ENCODE measurements at regions of chr9 and their contacts with region 1.

Region 1: DNA sequence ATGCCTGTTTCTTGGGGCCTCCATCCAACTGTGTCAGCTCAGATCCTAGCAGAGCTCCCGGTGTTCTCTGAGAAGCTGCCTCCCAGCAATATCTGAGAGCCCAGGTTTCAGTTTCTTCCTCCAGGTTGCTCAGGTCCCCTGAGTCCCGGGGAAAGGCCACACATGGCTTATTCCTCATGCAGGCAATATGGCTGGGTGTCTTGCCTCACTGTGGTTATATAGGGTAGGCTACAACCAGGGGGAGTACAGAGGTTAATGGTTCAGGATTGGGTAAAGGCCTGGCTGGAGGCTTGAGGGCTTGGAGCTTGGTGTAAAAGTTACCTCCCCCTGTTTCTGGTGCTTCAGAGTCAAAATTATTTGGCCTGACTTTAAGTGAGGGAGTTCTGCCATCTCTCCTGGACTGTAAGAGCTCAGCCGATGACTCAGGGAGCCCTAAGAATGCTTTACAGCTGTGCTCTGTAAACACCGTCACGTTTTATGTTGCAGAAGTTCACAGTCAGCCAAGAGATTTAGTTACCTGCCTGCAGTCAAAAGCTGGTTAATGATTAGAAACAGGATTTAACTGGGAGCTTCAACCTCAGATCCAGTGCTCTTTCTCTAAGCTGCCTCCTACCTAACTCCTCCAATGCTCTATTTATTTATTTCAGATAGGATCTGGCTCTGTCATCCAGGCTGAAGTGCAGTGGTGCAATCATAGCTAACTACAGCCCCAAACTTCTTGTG is 24.3 kb upstream of the UBAP2 start:
- DNase-seq: no peak
- ATAC-seq: peak; percentile 56
- H3K4me3 ChIP-seq: no peak overlapping the region
- H3K27ac ChIP-seq: 0 out of 2 replicates have a peak overlapping the region, but pooled peaks have one; percentile 18
- H3K4me1 ChIP-seq: peaks cover 11% of the 10 kb centered on the region
- H3K27me3 ChIP-seq: no peaks in the 10 kb centered on the region
- CTCF ChIP-seq: no peak
- EP300 ChIP-seq: no peak
- POLR2A ChIP-seq: no peak
- RAD21 ChIP-seq: no peak

Region 2: GRCh38 chr9:33816327-33817252 is 256.4 kb before region 1 on chr9 and contains the start of gene UBE2R2:
- CTCF ChIA-PET with region 1: interaction called, 63 read pairs
- POLR2A ChIA-PET with region 1: no interaction called
- RAD21 ChIA-PET with region 1: interaction called, 10 read pairs
- SMC1A ChIA-PET with region 1: interaction called, 12 read pairs
- in situ Hi-C with region 1: no loop called
- intact Hi-C with region 1: no loop called
- DNase-seq: peak; percentile 85
- ATAC-seq: peak; percentile 71
- H3K4me3 ChIP-seq: peak within 1 kb of the TSS; percentile 95
- H3K27ac ChIP-seq: peak within 1 kb of the TSS; percentile 95
- H3K4me1 ChIP-seq: peaks cover 11% of the 10 kb centered on the region
- H3K27me3 ChIP-seq: no peaks in the 10 kb centered on the region
- CTCF ChIP-seq: no peak
- EP300 ChIP-seq: 0 out of 4 replicates have a peak, but pooled peaks of 1 of the 2 experiments have one; percentile 42
- POLR2A ChIP-seq: peak; percentile 86
- RAD21 ChIP-seq: no peak
- polyA plus RNA-seq, gene UBE2R2: 11.4 to 17.2 TPM

Region 3: GRCh38 chr9:33942471-33943083 is 130.5 kb before region 1 on chr9:
- CTCF ChIA-PET with region 1: interaction called, 10 read pairs
- POLR2A ChIA-PET with region 1: no interaction called
- RAD21 ChIA-PET with region 1: interaction called, 3 read pairs
- SMC1A ChIA-PET with region 1: no interaction called
- in situ Hi-C with region 1: no loop called
- intact Hi-C with region 1: no loop called
- DNase-seq: no peak
- ATAC-seq: no peak
- H3K4me3 ChIP-seq: no peak overlapping the region
- H3K27ac ChIP-seq: no peak overlapping the region
- H3K4me1 ChIP-seq: no peaks in the 10 kb centered on the region
- H3K27me3 ChIP-seq: no peaks in the 10 kb centered on the region
- CTCF ChIP-seq: no peak
- EP300 ChIP-seq: no peak
- POLR2A ChIP-seq: no peak
- RAD21 ChIP-seq: no peak

Region 4: DNA sequence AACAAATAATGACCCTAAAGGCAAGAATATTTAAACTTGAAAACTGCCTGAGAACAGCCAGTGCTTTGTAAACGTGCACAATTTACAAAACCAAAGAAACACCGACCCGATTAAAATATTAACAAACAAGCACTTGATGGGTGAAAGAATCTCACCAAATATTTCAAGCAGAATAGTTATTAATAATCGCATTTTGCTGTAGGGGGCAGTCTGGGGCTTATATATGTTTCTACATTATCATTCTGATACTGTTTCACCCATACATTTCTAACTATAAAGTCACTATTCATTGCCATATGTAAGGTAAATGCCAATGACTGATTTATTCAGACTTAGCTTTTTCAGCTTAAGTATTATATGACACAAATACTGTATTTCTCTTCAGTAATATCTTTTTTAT is 62.0 kb before region 1 on chr9:
- CTCF ChIA-PET with region 1: interaction called, 46 read pairs
- POLR2A ChIA-PET with region 1: no interaction called
- RAD21 ChIA-PET with region 1: interaction called, 4 read pairs
- SMC1A ChIA-PET with region 1: interaction called, 17 read pairs
- in situ Hi-C with region 1: no loop called
- intact Hi-C with region 1: no loop called
- DNase-seq: no peak
- ATAC-seq: peak; percentile 53; the same call in 2 of the 3 replicates
- H3K4me3 ChIP-seq: no peak overlapping the region
- H3K27ac ChIP-seq: no peak overlapping the region
- H3K4me1 ChIP-seq: no peaks in the 10 kb centered on the region
- H3K27me3 ChIP-seq: no peaks in the 10 kb centered on the region
- CTCF ChIP-seq: peak in 2 of 3 experiments; percentile 34 to 47; a peak in 2 of 6 replicates
- EP300 ChIP-seq: no peak
- POLR2A ChIP-seq: no peak
- RAD21 ChIP-seq: peak; percentile 47

Region 5: DNA sequence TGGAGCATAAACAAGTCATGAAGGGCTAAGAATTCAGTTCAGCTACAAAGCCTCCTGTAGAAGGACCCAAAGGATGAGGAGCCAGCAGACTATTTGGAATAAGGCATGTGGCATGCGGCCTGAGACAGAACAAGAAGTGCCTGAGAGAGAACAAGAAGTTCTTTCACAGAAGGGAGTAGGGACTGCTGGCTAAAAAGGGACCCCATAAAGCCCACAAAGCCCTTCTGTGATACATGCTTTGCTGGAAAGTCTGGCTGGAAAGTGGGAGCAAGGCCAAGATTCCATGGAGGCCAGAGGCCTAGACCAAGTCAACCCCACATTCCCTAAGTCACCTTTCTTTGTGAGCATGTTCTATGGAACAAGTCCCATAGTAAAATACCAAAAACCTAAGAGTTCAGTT is 11.5 kb after region 1 on chr9:
- CTCF ChIA-PET with region 1: interaction called, 18 read pairs
- POLR2A ChIA-PET with region 1: interaction called, 3 read pairs
- RAD21 ChIA-PET with region 1: interaction called, 4 read pairs
- SMC1A ChIA-PET with region 1: interaction called, 5 read pairs
- in situ Hi-C with region 1: no loop called
- intact Hi-C with region 1: no loop called
- DNase-seq: no peak
- ATAC-seq: no peak
- H3K4me3 ChIP-seq: no peak overlapping the region
- H3K27ac ChIP-seq: no peak overlapping the region
- H3K4me1 ChIP-seq: no peaks in the 10 kb centered on the region
- H3K27me3 ChIP-seq: no peaks in the 10 kb centered on the region
- CTCF ChIP-seq: no peak
- EP300 ChIP-seq: no peak
- POLR2A ChIP-seq: no peak
- RAD21 ChIP-seq: no peak

Region 6: GRCh38 chr9:34158362-34158869 is 85.4 kb after region 1 on chr9:
- CTCF ChIA-PET with region 1: no interaction called
- POLR2A ChIA-PET with region 1: no interaction called
- RAD21 ChIA-PET with region 1: no interaction called
- SMC1A ChIA-PET with region 1: no interaction called
- in situ Hi-C with region 1: no loop called
- intact Hi-C with region 1: no loop called
- DNase-seq: no peak
- ATAC-seq: no peak
- H3K4me3 ChIP-seq: no peak overlapping the region
- H3K27ac ChIP-seq: no peak overlapping the region
- H3K4me1 ChIP-seq: no peaks in the 10 kb centered on the region
- H3K27me3 ChIP-seq: no peaks in the 10 kb centered on the region
- CTCF ChIP-seq: no peak
- EP300 ChIP-seq: no peak
- POLR2A ChIP-seq: no peak
- RAD21 ChIP-seq: no peak